Ovary (tissue), 10 donors: ENCODE measurements at regions of chr17 and their contacts with region 1.

Region 1: DNA sequence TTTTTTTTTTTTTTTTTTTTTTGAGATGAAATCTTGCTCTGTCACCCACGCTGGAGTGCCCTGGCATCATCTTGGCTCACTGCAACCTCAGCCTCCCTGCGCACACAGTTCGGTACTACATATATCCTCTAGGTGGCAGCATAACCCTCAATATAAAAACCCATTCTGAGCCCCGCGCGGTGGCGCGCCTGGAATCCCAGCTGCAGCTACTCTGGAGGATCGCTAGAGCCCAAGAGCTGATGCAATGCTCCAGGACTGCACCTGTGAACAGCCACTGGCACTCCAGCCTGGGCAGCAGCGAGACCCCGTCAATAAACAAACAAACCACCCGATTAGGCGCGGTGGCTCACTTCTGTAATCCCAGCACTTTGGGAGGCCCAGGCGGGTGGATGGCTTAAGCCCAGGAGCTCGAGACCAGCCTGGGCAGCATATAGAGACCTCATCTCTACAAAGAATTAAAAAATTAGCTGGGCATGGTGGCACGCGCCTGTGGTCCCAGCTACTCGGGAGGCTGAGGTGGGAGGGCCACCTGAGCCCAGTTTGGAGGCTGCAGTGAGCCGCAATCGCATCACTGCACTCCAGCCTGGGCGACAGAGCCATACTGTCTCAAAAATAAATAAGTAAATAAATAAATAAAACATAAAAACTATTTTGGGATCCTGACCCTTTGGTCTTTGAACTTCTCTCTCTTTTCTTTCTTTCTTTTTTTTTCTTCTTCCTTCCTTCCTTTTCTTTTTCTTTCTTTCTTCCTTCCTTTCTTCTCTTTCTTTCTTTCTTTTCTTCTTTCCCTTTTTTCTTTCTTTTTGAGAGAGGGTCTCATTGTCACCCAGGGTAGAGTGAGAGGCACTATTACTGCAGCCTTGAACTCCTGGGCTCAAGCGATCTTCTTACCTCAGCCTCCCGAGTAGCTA is 15.4 kb upstream of the AKAP10 start:
- DNase-seq: peak; percentile 87 to 92 (median 89)
- H3K4me3 ChIP-seq: no peak overlapping the region
- H3K27ac ChIP-seq: no peak overlapping the region
- H3K4me1 ChIP-seq: no peaks in the 10 kb centered on the region
- H3K27me3 ChIP-seq: no peaks in the 10 kb centered on the region
- CTCF ChIP-seq: peak; percentile 45 to 79 (median 69)
- EP300 ChIP-seq: no peak
- POLR2A ChIP-seq: no peak

Region 2: GRCh38 chr17:19940722-19941464 is 52.2 kb before region 1 on chr17:
- intact Hi-C with region 1: no loop called
- DNase-seq: no peak
- H3K4me3 ChIP-seq: no peak overlapping the region
- H3K27ac ChIP-seq: no peak overlapping the region
- H3K4me1 ChIP-seq: no peaks in the 10 kb centered on the region
- H3K27me3 ChIP-seq: no peaks in the 10 kb centered on the region
- CTCF ChIP-seq: no peak
- EP300 ChIP-seq: no peak
- POLR2A ChIP-seq: no peak

Region 3: DNA sequence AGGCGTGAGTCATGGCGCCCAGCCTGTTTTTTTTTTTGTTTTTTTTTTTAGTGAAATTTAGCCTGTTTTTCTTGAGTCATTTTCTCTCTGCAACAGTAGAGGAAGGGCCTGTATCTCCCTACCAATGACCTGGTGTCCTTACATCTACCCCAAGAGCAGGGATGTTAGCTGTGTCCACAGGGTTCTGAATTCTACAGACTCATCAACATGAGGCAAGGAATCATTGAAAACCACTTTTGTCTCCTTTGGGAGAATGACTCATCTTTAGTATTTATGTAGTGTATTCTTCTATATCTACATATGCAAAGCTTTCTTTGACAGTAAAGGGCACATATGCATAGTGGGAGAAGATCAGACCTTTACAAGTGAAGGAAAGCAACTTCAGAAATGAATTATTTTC is 121.4 kb after region 1 on chr17:
- intact Hi-C with region 1: loop called in 3 of 4 experiments (anchors 1 to 5 kb)
- DNase-seq: no peak
- H3K4me3 ChIP-seq: no peak overlapping the region
- H3K27ac ChIP-seq: no peak overlapping the region
- H3K4me1 ChIP-seq: no peaks in the 10 kb centered on the region
- H3K27me3 ChIP-seq: no peaks in the 10 kb centered on the region
- CTCF ChIP-seq: no peak
- EP300 ChIP-seq: no peak
- POLR2A ChIP-seq: no peak

Region 4: DNA sequence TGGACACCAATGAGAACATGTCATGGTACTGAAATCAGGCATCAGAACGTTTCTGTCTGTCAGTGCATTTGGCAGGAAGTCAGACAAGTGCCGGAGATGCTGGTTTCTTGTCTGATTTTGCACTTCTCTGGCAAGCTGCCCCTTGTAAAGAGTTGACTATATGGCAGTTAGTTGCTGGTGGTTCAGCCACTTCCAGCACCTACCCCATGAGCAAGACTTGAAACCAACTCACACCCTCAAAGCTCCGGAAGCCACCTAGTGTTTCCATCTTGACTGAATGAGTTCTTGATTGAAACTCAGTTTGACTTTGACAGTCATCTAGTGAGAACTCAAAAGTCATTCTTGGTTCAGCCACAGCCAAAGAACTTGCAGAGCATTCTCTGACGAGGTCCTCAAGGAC is 241.2 kb after region 1 on chr17:
- intact Hi-C with region 1: loop called in 1 of 4 experiments (anchors 5 kb)
- DNase-seq: no peak
- H3K4me3 ChIP-seq: no peak overlapping the region
- H3K27ac ChIP-seq: no peak overlapping the region
- H3K4me1 ChIP-seq: peaks cover 3% of the 10 kb centered on the region
- H3K27me3 ChIP-seq: no peaks in the 10 kb centered on the region
- CTCF ChIP-seq: no peak
- EP300 ChIP-seq: no peak
- POLR2A ChIP-seq: no peak